Naive thymus-derived CD8-positive, alpha-beta T cell (primary cell): ENCODE measurements at regions of chr7 and their contacts with region 1.

Region 1: GRCh38 chr7:148914208-148914777 is 30.2 kb upstream of the EZH2 start:
- DNase-seq: no peak
- ATAC-seq: no peak
- H3K4me3 Mint-ChIP-seq: peak overlapping the region in 7 of 10 donors; percentile 48 to 78 (median 73)
- H3K27ac Mint-ChIP-seq: peak overlapping the region in 9 of 10 donors; percentile 28 to 90 (median 70)
- H3K4me1 Mint-ChIP-seq: peaks cover 21 to 60% (median 48%) of the 10 kb centered on the region in 4 donors
- H3K27me3 Mint-ChIP-seq: no peaks in the 10 kb centered on the region

Region 2: GRCh38 chr7:148527707-148528168 is 386.6 kb before region 1 on chr7:
- POLR2A ChIA-PET with region 1: no interaction called
- DNase-seq: peak; percentile 62 to 85 (median 77)
- ATAC-seq: peak; percentile 99
- H3K4me3 Mint-ChIP-seq: no peak overlapping the region
- H3K27ac Mint-ChIP-seq: no peak overlapping the region
- H3K4me1 Mint-ChIP-seq: peaks cover 0 to 3% (median 0%) of the 10 kb centered on the region in 4 donors
- H3K27me3 Mint-ChIP-seq: peaks cover 14 to 72% (median 27%) of the 10 kb centered on the region in 5 donors

Region 3: DNA sequence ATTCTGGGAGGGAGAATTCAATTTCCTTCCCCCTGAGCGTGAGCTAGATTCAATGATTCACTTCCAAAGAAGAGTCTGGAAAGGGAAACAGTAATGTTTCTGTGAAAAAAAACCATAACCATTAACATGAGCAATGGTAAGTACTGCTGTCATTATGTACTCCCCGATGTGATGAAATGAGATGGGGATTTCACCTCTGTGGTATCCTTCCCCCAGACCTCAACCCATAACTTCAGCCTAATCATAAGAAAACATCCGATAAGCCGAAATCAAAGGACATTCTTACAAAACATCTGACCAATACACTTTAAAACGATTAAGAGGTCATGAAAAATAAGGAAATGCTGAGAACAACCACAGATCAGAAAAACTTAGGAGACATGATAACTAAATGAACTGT is 57.4 kb before region 1 on chr7:
- POLR2A ChIA-PET with region 1: no interaction called
- DNase-seq: no peak
- ATAC-seq: no peak
- H3K4me3 Mint-ChIP-seq: no peak overlapping the region
- H3K27ac Mint-ChIP-seq: no peak overlapping the region
- H3K4me1 Mint-ChIP-seq: peaks cover 2 to 8% (median 7%) of the 10 kb centered on the region in 4 donors
- H3K27me3 Mint-ChIP-seq: no peaks in the 10 kb centered on the region

Region 4: DNA sequence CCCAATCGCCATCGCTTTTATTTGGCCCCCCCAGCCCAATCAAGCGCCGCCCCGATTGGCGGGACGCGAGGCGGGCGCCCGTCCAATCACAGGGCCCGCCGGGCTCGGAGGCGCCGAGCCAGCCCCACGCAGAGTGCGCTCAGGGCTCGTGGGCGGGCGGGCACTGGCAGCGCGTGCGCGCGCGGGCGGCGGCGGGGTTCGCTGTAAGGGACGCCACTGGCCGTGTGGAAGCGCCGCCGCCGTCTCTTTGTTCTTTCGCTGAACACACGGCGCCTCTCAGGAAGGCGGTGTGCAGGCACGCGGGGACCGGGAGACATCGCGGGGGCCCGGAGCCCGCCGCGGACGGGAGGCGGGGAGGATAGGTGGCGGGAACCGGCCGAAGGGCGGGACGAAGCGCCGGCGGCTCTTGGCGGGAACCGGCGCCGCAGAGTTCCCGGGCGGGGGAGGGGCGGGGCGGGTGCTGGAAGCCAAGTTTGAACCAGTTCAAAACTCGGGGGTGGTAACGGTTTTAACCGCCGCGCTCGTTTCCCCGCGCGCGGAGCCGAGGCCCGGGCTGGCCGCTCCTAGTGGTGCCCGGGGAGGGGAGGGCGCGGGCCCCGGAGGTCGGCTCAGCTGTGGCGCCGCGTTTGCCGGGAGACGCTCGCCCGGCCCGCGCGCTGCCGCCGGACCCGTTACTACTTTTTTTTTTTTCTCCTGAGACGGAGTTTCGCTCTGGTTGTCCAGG is 29.8 kb before region 1 on chr7:
- POLR2A ChIA-PET with region 1: interaction called, 16 read pairs
- DNase-seq: peak; percentile 88 to 95 (median 94)
- ATAC-seq: peak; percentile 87 to 89
- H3K4me3 Mint-ChIP-seq: peak overlapping the region; percentile 79 to 95 (median 92)
- H3K27ac Mint-ChIP-seq: peak overlapping the region; percentile 68 to 95 (median 92)
- H3K4me1 Mint-ChIP-seq: peaks cover 8 to 25% (median 16%) of the 10 kb centered on the region in 4 donors
- H3K27me3 Mint-ChIP-seq: no peaks in the 10 kb centered on the region